ENCODE measurements at regions of chr6 and their contacts with region 1.

Region 1: DNA sequence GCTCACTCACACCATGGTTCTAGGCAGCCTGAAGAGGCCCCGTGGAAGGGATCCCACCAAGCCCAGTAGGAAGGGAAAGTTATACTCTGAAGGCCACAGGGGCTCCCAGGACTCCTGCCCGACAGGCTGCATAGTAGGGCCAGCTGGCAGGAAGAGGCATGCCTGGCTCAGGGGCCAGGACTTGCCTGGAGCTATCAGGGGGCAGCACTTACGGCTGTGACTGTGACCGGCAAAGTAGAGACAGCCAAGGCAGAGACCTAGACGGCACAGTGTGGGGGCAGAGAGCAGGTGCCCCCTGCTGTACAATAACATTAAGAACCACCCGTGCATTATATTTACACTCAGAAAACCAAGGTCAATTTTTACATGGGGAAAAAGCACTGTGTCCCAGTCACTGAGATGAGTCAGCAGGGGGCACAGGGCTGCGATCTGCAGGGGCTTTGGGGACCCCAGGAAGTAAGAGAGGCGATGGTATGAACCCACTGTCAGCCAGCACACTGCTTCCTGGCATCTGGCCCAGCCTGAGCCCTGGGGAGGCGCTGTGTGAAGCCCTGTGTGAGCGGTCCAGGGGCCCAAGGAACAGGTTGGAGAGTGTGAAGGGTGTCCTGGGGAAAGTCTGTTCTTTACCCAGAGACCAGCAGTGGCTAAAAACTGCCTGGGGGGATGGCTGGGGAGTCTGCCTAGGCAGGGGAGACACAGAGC is 9.9 kb downstream of the CCDC167 start:
- DNase-seq: no peak
- H3K4me3 ChIP-seq: no peak overlapping the region
- H3K27ac ChIP-seq: peak overlapping the region in 4 of 8 donors; percentile 16 to 69 (median 30)
- H3K4me1 ChIP-seq: peaks cover 0 to 57% (median 28%) of the 10 kb centered on the region in 6 donors
- H3K27me3 ChIP-seq: no peaks in the 10 kb centered on the region
- CTCF ChIP-seq: peak in 1 of 11 experiments; percentile 11
- POLR2A ChIP-seq: no peak

Region 2: GRCh38 chr6:37339741-37340638 is 149.8 kb before region 1 on chr6:
- intact Hi-C with region 1: no loop called
- DNase-seq: no peak
- H3K4me3 ChIP-seq: no peak overlapping the region
- H3K27ac ChIP-seq: no peak overlapping the region
- H3K4me1 ChIP-seq: no peaks in the 10 kb centered on the region
- H3K27me3 ChIP-seq: no peaks in the 10 kb centered on the region
- CTCF ChIP-seq: no peak
- POLR2A ChIP-seq: no peak

Region 3: DNA sequence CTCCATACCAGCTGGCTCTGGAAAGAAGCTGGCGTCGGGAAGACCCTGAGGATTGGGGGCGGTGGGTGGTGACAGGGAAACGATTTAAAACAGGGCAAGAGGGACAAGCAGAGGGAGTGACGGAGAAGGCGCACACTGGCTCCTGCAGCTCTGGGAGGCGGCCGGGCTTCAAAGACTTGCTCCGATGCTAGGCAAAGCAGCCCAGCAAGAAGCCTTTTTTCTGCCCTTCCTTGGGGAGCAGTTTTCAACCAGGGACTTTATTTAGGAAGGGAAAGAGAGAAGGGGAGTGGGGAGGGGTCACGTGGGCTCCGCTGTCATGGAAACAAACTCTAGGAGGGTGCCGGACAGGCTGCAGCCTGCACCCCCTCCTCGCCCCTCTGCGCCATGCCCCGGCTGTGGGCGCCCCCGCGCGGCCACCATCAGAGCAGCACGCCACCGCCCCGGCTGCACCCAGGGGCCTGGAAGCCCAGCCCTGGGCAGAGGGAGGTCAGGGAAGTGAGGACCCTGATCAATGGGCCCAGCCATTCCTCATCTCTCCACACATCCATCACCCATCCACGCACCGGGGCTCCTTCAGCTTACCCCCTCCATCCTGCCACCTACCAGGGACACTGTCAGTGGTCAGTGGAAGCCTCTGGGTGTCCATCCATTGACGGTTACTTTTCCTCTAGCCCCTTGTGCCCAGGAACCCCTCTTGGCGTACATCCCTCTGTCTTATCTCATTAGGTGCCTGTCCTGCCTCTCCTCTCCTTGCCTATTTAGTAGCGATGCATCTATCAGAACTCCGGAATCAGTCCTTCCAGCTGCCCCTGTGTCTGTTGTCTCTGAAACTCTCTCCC is 76.5 kb after region 1 on chr6:
- intact Hi-C with region 1: loop called (anchors 5 kb)
- DNase-seq: peak; percentile 91
- H3K4me3 ChIP-seq: peak overlapping the region in 7 of 8 donors; percentile 15 to 66 (median 27)
- H3K27ac ChIP-seq: no peak overlapping the region
- H3K4me1 ChIP-seq: peaks cover 12 to 61% (median 36%) of the 10 kb centered on the region in 6 donors
- H3K27me3 ChIP-seq: peaks cover 0 to 24% (median 4%) of the 10 kb centered on the region in 7 donors
- CTCF ChIP-seq: peak; percentile 75 to 96 (median 92)
- POLR2A ChIP-seq: no peak

Region 4: GRCh38 chr6:37691904-37692806 is 202.3 kb after region 1 on chr6:
- intact Hi-C with region 1: loop called (anchors 5 kb)
- DNase-seq: peak; percentile 94
- H3K4me3 ChIP-seq: no peak overlapping the region
- H3K27ac ChIP-seq: no peak overlapping the region
- H3K4me1 ChIP-seq: peaks cover 6 to 33% (median 23%) of the 10 kb centered on the region in 6 donors
- H3K27me3 ChIP-seq: peaks cover 0 to 52% (median 36%) of the 10 kb centered on the region in 7 donors
- CTCF ChIP-seq: peak; percentile 95 to 99 (median 98)
- POLR2A ChIP-seq: no peak

Measured in spleen (tissue), 13 donors.